ENCODE measurements at regions of chr11 and their contacts with region 1.

Region 1: GRCh38 chr11:18321980-18322711 is at the starts of genes GTF2H1 and HPS5:
- DNase-seq: peak; percentile 98
- ATAC-seq: peak; percentile 96
- H3K4me3 ChIP-seq: peak within 1 kb of the TSS; percentile 71 to 81 (median 78)
- H3K27ac ChIP-seq: peak within 1 kb of the TSS; percentile 95
- H3K4me1 ChIP-seq: peaks cover 62% of the 10 kb centered on the region
- H3K27me3 ChIP-seq: no peaks in the 10 kb centered on the region; a peak in 1 of 5 replicates
- CTCF ChIP-seq: peak; percentile 16; the same call in 1 of the 2 replicates
- EP300 ChIP-seq: peak in 1 of 2 experiments; percentile 12; a peak in 1 of 4 replicates
- POLR2A ChIP-seq: peak; percentile 97 to 98
- RAD21 ChIP-seq: peak; percentile 51
- total RNA-seq, gene GTF2H1: 51.4 and 70.0 TPM in 2 replicates
- total RNA-seq, gene HPS5: 25.5 and 31.8 TPM in 2 replicates

Region 2: DNA sequence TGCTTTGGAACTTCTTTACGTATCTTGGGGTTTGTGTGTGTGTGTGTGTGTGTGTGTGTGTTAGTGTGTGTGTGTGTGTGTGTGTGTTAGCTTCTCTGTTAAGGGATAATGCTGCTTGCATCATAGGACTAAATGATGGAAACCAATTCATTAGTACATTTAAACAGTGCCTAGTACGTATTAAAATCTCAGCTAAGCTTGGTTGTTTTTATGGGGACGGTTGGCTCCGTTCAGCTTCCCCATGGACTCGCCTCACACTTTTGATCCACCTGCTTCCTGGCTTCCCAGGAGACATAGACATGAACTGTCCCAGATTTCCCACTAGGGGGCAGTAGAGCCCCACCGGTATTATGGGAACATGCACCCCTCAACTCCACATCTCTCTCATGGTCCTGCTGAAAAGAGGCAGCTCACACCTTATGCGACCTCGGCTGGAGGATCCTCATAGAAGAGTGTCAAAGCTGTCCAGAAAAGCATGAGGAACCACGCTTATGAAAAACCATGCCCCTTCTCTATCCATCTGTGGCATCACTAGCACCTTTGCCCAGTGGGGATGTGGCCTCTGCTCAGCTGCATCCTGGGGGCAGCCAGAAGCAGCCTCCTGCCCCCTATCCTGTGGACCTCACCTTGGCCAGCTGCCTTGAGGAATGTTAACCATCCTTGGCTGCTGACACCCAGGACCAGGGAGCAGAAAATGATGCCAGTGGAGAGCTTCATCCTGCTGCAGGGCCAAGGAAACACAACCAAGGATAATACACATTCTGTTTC is 206.6 kb before region 1 on chr11:
- CTCF ChIA-PET with region 1: no interaction called
- POLR2A ChIA-PET with region 1: interaction called, 4 read pairs
- in situ Hi-C with region 1: no loop called
- intact Hi-C with region 1: loop called (anchors 5 kb)
- DNase-seq: peak; percentile 75
- ATAC-seq: peak; percentile 96
- H3K4me3 ChIP-seq: no peak overlapping the region
- H3K27ac ChIP-seq: no peak overlapping the region
- H3K4me1 ChIP-seq: peaks cover 53% of the 10 kb centered on the region
- H3K27me3 ChIP-seq: peaks cover 0 to 4% of the 10 kb centered on the region in 2 experiments; a peak in 2 of 5 replicates
- CTCF ChIP-seq: peak; percentile 96
- EP300 ChIP-seq: no peak
- POLR2A ChIP-seq: no peak
- RAD21 ChIP-seq: peak; percentile 92

Region 3: GRCh38 chr11:18171377-18172000 is 150.7 kb before region 1 on chr11:
- CTCF ChIA-PET with region 1: no interaction called
- POLR2A ChIA-PET with region 1: no interaction called
- in situ Hi-C with region 1: no loop called
- intact Hi-C with region 1: loop called (anchors 5 kb)
- DNase-seq: peak; percentile 53
- ATAC-seq: peak; percentile 99
- H3K4me3 ChIP-seq: no peak overlapping the region
- H3K27ac ChIP-seq: no peak overlapping the region
- H3K4me1 ChIP-seq: peaks cover 17% of the 10 kb centered on the region; the same call in 1 of the 2 replicates
- H3K27me3 ChIP-seq: peaks cover 0 to 3% of the 10 kb centered on the region in 2 experiments; a peak in 2 of 5 replicates
- CTCF ChIP-seq: peak; percentile 90
- EP300 ChIP-seq: no peak
- POLR2A ChIP-seq: no peak
- RAD21 ChIP-seq: peak; percentile 82

Region 4: GRCh38 chr11:18235394-18236334 is 86.5 kb before region 1 on chr11:
- CTCF ChIA-PET with region 1: no interaction called
- POLR2A ChIA-PET with region 1: interaction called, 7 read pairs
- in situ Hi-C with region 1: no loop called
- intact Hi-C with region 1: loop called (anchors 10 kb)
- DNase-seq: no peak
- ATAC-seq: no peak
- H3K4me3 ChIP-seq: peak overlapping the region; percentile 28 to 53 (median 32); a peak in 3 of 6 replicates
- H3K27ac ChIP-seq: peak overlapping the region; percentile 72
- H3K4me1 ChIP-seq: peaks cover 99% of the 10 kb centered on the region
- H3K27me3 ChIP-seq: no peaks in the 10 kb centered on the region
- CTCF ChIP-seq: no peak
- EP300 ChIP-seq: no peak
- POLR2A ChIP-seq: peak in 1 of 2 experiments; percentile 30; a peak in 1 of 4 replicates
- RAD21 ChIP-seq: no peak

Region 5: GRCh38 chr11:18367431-18367830 is 45.3 kb after region 1 on chr11:
- CTCF ChIA-PET with region 1: no interaction called
- POLR2A ChIA-PET with region 1: no interaction called
- in situ Hi-C with region 1: no loop called
- intact Hi-C with region 1: no loop called
- DNase-seq: no peak
- ATAC-seq: no peak
- H3K4me3 ChIP-seq: no peak overlapping the region
- H3K27ac ChIP-seq: no peak overlapping the region
- H3K4me1 ChIP-seq: peaks cover 12% of the 10 kb centered on the region; the same call in 1 of the 2 replicates
- H3K27me3 ChIP-seq: no peaks in the 10 kb centered on the region
- CTCF ChIP-seq: no peak
- EP300 ChIP-seq: no peak
- POLR2A ChIP-seq: no peak
- RAD21 ChIP-seq: no peak

Region 6: DNA sequence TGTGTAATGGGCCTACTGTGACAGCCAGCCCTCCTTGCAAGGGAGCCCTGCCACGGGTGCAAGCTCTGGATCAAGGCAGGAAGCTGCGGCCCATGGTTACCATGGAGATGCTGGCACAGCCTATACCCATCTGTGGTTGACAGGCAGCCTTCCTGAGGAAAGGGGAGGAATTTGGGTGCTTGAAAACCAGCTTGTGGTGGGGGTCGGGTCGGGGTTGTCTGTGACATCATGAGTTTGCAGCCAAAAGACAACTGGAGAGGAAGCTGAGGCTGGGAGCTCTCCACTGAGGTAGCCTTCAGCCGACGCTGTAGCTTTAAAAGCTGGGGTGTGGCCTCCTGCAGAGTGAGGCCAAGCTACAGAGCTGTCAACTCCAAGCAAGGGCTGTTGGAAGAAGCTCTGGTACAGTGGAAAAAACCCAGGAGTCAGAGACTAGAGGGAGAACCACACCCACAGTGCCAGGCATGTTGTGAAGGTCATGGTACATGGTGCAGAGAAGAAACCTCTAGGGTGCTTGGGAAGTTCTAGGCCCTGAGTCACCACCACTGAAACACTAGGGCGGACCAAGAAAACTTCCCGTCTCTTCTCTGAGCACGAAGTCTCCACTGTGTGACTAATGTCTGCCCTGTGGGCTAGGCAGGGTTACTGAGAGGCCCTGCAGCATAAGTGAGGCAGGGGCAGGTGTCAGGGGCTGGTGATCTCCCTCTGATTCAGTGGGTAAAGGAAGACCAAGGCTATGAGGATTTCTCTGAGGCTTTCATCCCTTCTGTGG is 61.4 kb after region 1 on chr11:
- CTCF ChIA-PET with region 1: no interaction called
- POLR2A ChIA-PET with region 1: interaction called, 23 read pairs
- in situ Hi-C with region 1: no loop called
- intact Hi-C with region 1: loop called (anchors 5 kb)
- DNase-seq: peak; percentile 91
- ATAC-seq: peak; percentile 83
- H3K4me3 ChIP-seq: peak overlapping the region; percentile 54 to 74 (median 58)
- H3K27ac ChIP-seq: peak overlapping the region; percentile 82
- H3K4me1 ChIP-seq: peaks cover 56% of the 10 kb centered on the region
- H3K27me3 ChIP-seq: no peaks in the 10 kb centered on the region
- CTCF ChIP-seq: no peak
- EP300 ChIP-seq: peak in 1 of 2 experiments; percentile 47; a peak in 1 of 4 replicates
- POLR2A ChIP-seq: peak in 1 of 2 experiments; percentile 28; a peak in 2 of 4 replicates
- RAD21 ChIP-seq: no peak

Region 7: GRCh38 chr11:18395735-18396504 is 73.8 kb after region 1 on chr11:
- CTCF ChIA-PET with region 1: no interaction called
- POLR2A ChIA-PET with region 1: interaction called, 36 read pairs
- in situ Hi-C with region 1: no loop called
- intact Hi-C with region 1: loop called (anchors 1 kb)
- DNase-seq: peak; percentile 97
- ATAC-seq: peak; percentile 83
- H3K4me3 ChIP-seq: peak overlapping the region; percentile 83 to 97 (median 87)
- H3K27ac ChIP-seq: peak overlapping the region; percentile 83
- H3K4me1 ChIP-seq: peaks cover 71% of the 10 kb centered on the region
- H3K27me3 ChIP-seq: no peaks in the 10 kb centered on the region; a peak in 1 of 5 replicates
- CTCF ChIP-seq: no peak; the same call in 1 of the 2 replicates
- EP300 ChIP-seq: peak in 1 of 2 experiments; percentile 40; a peak in 1 of 4 replicates
- POLR2A ChIP-seq: peak; percentile 75 to 90
- RAD21 ChIP-seq: peak; percentile 35; the same call in 1 of the 2 replicates

Region 8: GRCh38 chr11:18578975-18579598 is 256.9 kb after region 1 on chr11:
- CTCF ChIA-PET with region 1: no interaction called
- POLR2A ChIA-PET with region 1: no interaction called
- in situ Hi-C with region 1: no loop called
- intact Hi-C with region 1: no loop called
- DNase-seq: peak; percentile 93
- ATAC-seq: peak; percentile 98
- H3K4me3 ChIP-seq: peak overlapping the region; percentile 17 to 27 (median 24); a peak in 3 of 6 replicates
- H3K27ac ChIP-seq: peak overlapping the region; percentile 79
- H3K4me1 ChIP-seq: peaks cover 66% of the 10 kb centered on the region
- H3K27me3 ChIP-seq: no peaks in the 10 kb centered on the region
- CTCF ChIP-seq: no peak
- EP300 ChIP-seq: no peak; a peak in 1 of 4 replicates
- POLR2A ChIP-seq: no peak
- RAD21 ChIP-seq: no peak

Region 9: DNA sequence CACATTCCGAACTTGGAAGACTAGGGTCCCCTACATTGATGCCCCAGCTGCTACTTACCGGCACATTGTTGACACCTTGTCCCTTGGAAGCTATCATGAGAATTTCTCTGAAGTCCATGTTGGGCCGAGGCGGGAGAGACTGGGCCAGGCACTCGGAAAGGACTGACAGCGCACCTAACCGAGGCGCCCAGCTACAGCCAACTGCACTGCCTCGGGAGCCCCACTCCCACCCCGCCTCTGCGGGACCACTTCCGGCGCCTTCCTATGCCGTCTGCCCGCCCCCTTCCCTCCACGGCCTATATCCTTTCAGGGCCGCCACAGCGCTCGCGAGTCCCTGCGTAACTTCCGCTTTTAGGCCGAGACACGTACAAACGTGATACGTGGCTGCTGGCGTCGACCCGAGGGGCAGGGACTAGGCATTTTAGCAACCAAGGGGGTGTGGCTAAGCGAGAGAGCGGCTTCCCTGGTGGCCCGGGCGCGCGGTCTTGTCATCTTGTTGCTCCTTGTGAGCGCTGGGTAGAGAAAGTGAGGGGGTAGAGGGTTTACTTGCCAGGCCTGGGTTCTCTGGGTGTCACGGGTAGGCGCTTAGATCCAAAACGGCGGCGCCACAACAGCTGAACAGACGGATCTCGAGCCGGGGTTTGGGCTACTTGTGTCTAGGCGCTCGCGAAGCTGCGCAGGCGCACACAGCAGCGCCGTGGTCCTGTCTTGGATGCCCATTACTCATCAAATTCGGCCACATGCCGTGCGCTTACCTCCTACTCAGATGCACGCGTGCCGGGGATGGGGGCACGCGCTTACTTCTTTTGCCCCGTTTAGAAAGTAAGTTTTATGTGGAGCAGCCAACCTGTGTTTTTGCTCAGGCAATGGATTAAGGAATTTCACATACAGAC is 312.2 kb after region 1 on chr11 and contains the start of gene SPTY2D1:
- CTCF ChIA-PET with region 1: no interaction called
- POLR2A ChIA-PET with region 1: no interaction called
- in situ Hi-C with region 1: no loop called
- intact Hi-C with region 1: loop called (anchors 5 kb)
- DNase-seq: peak; percentile 99
- ATAC-seq: peak; percentile 99
- H3K4me3 ChIP-seq: peak within 1 kb of the TSS; percentile 80 to 90 (median 84)
- H3K27ac ChIP-seq: peak within 1 kb of the TSS; percentile 84
- H3K4me1 ChIP-seq: peaks cover 12% of the 10 kb centered on the region
- H3K27me3 ChIP-seq: no peaks in the 10 kb centered on the region; a peak in 1 of 5 replicates
- CTCF ChIP-seq: 0 out of 2 replicates have a peak, but pooled peaks have one; percentile 11
- EP300 ChIP-seq: peak in 1 of 2 experiments; percentile 40; a peak in 1 of 4 replicates
- POLR2A ChIP-seq: peak; percentile 94
- RAD21 ChIP-seq: no peak; the same call in 1 of the 2 replicates
- total RNA-seq, gene SPTY2D1: 14.8 and 22.2 TPM in 2 replicates

Measured in HepG2 (cell line).